ENCODE measurements at regions of chr3 and their contacts with region 1.

Region 1: GRCh38 chr3:43180027-43180426 is 74.1 kb upstream of the POMGNT2 start:
- DNase-seq: no peak
- ATAC-seq: peak; percentile 90
- H3K4me3 Mint-ChIP-seq: peak overlapping the region; percentile 84
- H3K27ac Mint-ChIP-seq: peak overlapping the region; percentile 98
- H3K4me1 Mint-ChIP-seq: peaks cover 38% of the 10 kb centered on the region
- H3K27me3 Mint-ChIP-seq: peaks cover 1% of the 10 kb centered on the region

Region 2: GRCh38 chr3:43194490-43195114 is 14.6 kb after region 1 on chr3:
- POLR2A ChIA-PET with region 1: interaction called, 14 read pairs
- DNase-seq: peak; percentile 45
- ATAC-seq: peak; percentile 97
- H3K4me3 Mint-ChIP-seq: peak overlapping the region; percentile 63
- H3K27ac Mint-ChIP-seq: peak overlapping the region; percentile 95
- H3K4me1 Mint-ChIP-seq: peaks cover 42% of the 10 kb centered on the region
- H3K27me3 Mint-ChIP-seq: peaks cover 3% of the 10 kb centered on the region

Measured in activated naive CD8-positive, alpha-beta T cell treated with anti-CD3 and anti-CD28 coated beads, Interleukin-2, amount 10 ng/mL, durations not matched to agents 7 days and 5 days (primary cell).